ENCODE measurements at regions of chr21 and their contacts with region 1.

Region 1: GRCh38 chr21:36141513-36141925 is 6.6 kb downstream of the CBR3 start:
- DNase-seq: peak; percentile 64 to 94
- ATAC-seq: peak; percentile 94 to 97 (median 95)
- H3K4me3 ChIP-seq: no peak overlapping the region
- H3K4me3 Mint-ChIP-seq: no peak overlapping the region
- H3K27ac ChIP-seq: no peak overlapping the region
- H3K27ac Mint-ChIP-seq: no peak overlapping the region
- H3K4me1 ChIP-seq: peaks cover 18% of the 10 kb centered on the region
- H3K4me1 Mint-ChIP-seq: peaks cover 5 to 8% of the 10 kb centered on the region in 2 donors
- H3K27me3 ChIP-seq: no peaks in the 10 kb centered on the region
- H3K27me3 Mint-ChIP-seq: no peaks in the 10 kb centered on the region
- CTCF ChIP-seq: peak; percentile 94

Region 2: DNA sequence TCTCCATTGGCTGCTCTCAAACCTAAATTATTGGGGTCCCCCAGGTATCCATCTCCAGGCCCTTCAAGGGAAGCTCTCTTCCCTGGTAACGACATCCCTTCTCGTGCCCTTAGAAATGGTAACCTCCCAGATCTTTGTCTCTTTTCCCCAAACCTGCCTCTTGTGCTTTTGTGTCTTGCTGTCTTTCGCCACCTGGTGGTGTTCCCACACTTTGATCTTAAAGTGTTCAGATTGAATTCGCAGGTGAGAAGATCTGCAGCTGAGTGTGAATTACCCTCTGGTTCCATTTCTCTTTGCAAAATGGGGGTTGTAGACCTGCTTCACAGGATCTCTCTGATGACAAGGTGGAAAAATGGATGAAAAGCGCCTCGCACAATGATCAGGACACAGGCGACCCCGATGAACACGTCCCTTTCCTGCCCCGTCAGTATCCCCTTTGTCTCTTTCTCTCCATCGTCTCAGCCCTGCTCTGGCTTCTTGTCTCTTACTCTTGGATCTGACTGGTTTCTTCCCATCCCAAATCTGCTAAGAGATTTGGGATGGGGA is 68.2 kb after region 1 on chr21:
- intact Hi-C with region 1: loop called (anchors 1 kb)
- DNase-seq: peak in 1 of 2 donors; percentile 75
- ATAC-seq: peak in 2 of 3 donors; percentile 38 to 40
- H3K4me3 ChIP-seq: no peak overlapping the region
- H3K4me3 Mint-ChIP-seq: no peak overlapping the region
- H3K27ac ChIP-seq: no peak overlapping the region
- H3K27ac Mint-ChIP-seq: no peak overlapping the region
- H3K4me1 ChIP-seq: no peaks in the 10 kb centered on the region
- H3K4me1 Mint-ChIP-seq: peaks cover 0 to 9% of the 10 kb centered on the region in 2 donors
- H3K27me3 ChIP-seq: no peaks in the 10 kb centered on the region
- H3K27me3 Mint-ChIP-seq: no peaks in the 10 kb centered on the region
- CTCF ChIP-seq: peak; percentile 46

Measured in natural killer cell (primary cell).